GM18951 (cell line): ENCODE measurements at regions of chr10 and their contacts with region 1.

Region 1: GRCh38 chr10:93386631-93387369 is 95.3 kb downstream of the MYOF start:
- POLR2A ChIP-seq: no peak

Region 2: DNA sequence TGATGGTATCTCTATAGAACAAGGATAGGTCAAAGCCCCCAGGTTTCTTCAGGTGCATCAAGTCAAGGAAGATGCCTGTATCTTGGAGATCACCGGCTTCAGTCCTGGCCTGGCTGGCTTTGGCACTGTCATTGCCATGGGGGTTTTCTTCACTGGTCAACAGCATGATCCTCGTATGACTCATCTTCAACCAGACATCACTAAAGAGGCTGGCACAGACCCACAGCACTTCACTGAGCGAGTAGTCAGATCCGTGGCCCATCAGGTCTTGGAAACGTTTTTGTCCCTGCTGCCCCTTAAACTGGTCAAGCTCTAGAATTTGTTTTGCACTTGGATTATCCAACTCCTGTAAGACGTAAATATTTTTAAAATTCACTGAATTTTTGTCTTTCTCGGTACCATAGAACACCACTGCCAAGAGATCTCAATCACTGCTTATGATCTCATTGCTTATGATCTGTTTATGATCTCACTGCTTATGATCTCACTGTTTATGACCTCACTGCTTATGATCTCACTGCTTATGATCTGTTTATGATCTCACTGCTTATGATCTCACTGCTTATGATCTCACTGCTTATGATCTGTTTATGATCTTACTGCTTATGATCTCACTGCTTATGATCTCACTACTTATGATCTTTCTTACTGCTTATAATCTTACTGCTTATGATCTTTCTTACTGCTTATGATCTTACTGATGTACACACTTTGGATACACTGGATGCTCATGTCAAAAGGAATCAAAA is 177.9 kb before region 1 on chr10:
- in situ Hi-C with region 1: no loop called
- POLR2A ChIP-seq: no peak

Region 3: DNA sequence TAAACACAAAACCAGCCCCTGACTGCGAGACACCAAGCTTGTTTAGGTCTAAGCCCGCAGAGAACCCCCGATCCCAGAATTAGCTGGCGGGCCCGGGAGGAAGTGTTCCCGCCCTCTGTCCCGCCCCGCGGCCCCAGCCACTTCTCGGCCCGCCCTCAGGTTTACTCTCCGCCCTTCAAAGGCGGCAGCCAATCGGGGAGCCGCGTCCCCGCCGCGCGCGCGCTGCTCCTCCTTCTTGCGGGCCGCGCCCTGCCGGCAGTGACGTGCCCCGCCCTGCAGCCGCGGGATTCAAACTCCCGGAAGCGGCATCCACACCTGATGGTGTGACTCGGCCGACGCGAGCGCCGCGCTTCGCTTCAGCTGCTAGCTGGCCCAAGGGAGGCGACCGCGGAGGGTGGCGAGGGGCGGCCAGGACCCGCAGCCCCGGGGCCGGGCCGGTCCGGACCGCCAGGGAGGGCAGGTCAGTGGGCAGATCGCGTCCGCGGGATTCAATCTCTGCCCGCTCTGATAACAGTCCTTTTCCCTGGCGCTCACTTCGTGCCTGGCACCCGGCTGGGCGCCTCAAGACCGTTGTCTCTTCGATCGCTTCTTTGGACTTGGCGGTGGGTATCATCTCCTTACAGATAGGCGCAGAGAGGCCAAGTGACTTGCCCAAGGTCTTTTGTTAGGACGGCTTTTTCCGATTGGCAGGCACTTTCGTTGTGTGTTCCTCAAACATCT is 109.7 kb after region 1 on chr10 and contains the start of gene CEP55:
- in situ Hi-C with region 1: loop called (anchors 10 kb)
- POLR2A ChIP-seq: peak; percentile 92